ENCODE measurements at regions of chr18 and their contacts with region 1.

Region 1: DNA sequence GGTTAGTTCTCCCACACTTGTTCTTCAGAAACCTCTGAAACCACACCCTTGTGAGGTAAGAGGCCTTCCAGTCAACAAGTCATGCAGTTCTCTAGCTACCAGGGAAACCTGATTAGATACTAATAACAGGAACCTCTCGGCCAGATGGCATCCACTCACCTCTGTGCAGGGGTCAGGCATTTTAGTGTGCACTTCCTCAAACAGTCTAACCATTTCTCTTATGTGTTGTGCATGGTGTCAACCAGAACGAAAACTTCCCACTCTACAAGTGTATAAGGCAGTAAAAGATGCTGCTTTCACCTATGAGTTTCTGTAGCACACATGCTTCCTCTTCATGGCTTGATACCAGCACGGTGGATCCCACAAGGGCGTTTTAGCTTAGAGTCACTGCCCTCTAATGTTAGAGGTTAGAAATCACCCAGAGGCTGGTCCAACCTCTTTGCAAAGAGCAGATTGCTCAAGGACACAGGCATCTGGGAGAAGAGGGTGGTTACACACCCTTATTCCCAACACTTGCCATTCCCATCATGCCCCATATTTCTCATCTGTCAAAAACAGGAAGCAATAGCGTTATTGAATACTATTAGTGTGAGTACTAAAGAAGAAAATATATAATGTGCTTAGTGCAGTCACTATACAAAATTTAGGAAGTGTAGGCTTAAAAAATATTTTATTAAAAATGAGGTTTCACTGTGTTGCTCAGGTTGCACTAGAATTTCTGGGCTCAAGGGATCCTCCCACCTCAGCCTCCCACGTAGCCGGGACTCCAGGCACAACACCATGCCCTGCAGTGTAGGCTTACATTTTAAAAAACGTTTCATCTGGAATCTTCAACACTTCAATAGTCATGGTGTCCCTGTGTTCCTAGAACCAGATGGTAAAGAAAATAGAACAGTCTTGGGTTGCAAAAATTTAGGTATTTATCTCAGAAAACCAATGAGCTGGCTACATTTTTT is 34.5 kb upstream of the RAB31 start:
- DNase-seq: peak; percentile 25
- ATAC-seq: peak; percentile 95
- H3K4me3 Mint-ChIP-seq: peak overlapping the region; percentile 35
- H3K27ac Mint-ChIP-seq: peak overlapping the region; percentile 93
- H3K4me1 Mint-ChIP-seq: peaks cover 15% of the 10 kb centered on the region
- H3K27me3 Mint-ChIP-seq: no peaks in the 10 kb centered on the region
- CTCF ChIP-seq: no peak

Region 2: GRCh38 chr18:9808295-9809241 is 135.0 kb after region 1 on chr18:
- CTCF ChIA-PET with region 1: no interaction called
- POLR2A ChIA-PET with region 1: no interaction called
- intact Hi-C with region 1: no loop called
- DNase-seq: no peak
- ATAC-seq: no peak
- H3K4me3 Mint-ChIP-seq: no peak overlapping the region
- H3K27ac Mint-ChIP-seq: no peak overlapping the region
- H3K4me1 Mint-ChIP-seq: no peaks in the 10 kb centered on the region
- H3K27me3 Mint-ChIP-seq: no peaks in the 10 kb centered on the region
- CTCF ChIP-seq: no peak

Region 3: DNA sequence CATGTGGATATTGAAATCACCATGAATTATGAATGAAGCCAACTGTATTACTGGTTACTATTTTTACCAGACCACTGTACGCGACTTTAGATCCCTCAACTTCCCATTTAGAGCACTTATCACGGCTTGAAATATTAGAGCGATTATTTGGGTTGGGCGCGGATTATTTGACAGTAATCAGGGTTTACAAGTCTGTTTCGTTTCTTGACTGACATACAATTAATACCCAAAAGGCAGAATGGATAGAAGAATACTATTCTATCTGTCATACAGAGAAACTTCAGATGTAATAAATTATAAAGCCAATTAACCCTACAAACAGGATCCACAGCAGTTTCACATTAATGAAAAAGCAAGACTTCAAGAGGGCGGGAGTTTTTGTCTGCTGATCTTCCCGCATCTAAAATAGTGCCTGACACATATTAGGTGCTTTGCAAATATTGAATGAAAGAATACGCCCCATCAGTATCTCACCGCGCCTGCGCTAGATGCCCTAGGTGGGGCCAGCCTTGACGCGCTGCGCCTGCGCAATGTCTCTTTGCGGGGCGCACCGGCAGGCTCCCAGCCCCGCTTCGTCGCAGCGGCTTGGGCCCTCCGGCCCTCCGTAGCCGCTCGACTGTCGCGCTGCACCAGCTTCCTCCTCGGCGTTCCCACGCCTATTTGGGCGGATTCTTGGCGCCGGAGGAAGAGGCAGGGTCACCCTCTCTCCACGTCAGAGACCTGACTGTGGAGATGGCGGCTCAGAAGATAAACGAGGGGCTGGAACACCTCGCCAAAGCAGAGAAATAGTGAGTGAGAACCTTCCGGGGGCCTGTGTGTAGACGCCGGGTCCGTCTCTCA is 852.0 kb after region 1 on chr18 and contains the start of gene NAPG:
- CTCF ChIA-PET with region 1: no interaction called
- POLR2A ChIA-PET with region 1: no interaction called
- intact Hi-C with region 1: loop called (anchors 10 kb)
- DNase-seq: peak; percentile 86
- ATAC-seq: peak; percentile 91
- H3K4me3 Mint-ChIP-seq: peak within 1 kb of the TSS; percentile 99
- H3K27ac Mint-ChIP-seq: peak within 1 kb of the TSS; percentile 96
- H3K4me1 Mint-ChIP-seq: peaks cover 49% of the 10 kb centered on the region
- H3K27me3 Mint-ChIP-seq: no peaks in the 10 kb centered on the region
- CTCF ChIP-seq: no peak
- total RNA-seq, gene NAPG: 24.5 and 33.3 TPM in 2 replicates